ENCODE measurements at regions of chr7 and their contacts with region 1.

Region 1: GRCh38 chr7:44565097-44565794 is 8.5 kb downstream of the DDX56 start:
- DNase-seq: peak in 33 of 35 experiments; percentile 12 to 75 (median 51)
- ATAC-seq: peak; percentile 83 to 85 (median 84)
- H3K4me3 ChIP-seq: no peak overlapping the region
- H3K4me3 Mint-ChIP-seq: no peak overlapping the region
- H3K27ac ChIP-seq: no peak overlapping the region
- H3K27ac Mint-ChIP-seq: peak overlapping the region; percentile 25 to 61
- H3K4me1 ChIP-seq: peaks cover 0 to 9% of the 10 kb centered on the region in 2 experiments
- H3K4me1 Mint-ChIP-seq: peaks cover 8 to 20% (median 9%) of the 10 kb centered on the region in 3 donors
- H3K27me3 ChIP-seq: no peaks in the 10 kb centered on the region
- H3K27me3 Mint-ChIP-seq: no peaks in the 10 kb centered on the region

Region 2: GRCh38 chr7:44240983-44241510 is 324.2 kb before region 1 on chr7:
- CTCF ChIA-PET with region 1: interaction called in 1 of 2 experiments, 12 read pairs
- POLR2A ChIA-PET with region 1: no interaction called
- DNase-seq: peak in 34 of 35 experiments; percentile 11 to 72 (median 45)
- ATAC-seq: peak; percentile 73 to 94 (median 84)
- H3K4me3 ChIP-seq: peak overlapping the region in 1 of 2 donors; percentile 21
- H3K4me3 Mint-ChIP-seq: peak overlapping the region in 2 of 3 donors; percentile 39 to 45
- H3K27ac ChIP-seq: no peak overlapping the region
- H3K27ac Mint-ChIP-seq: no peak overlapping the region
- H3K4me1 ChIP-seq: peaks cover 0 to 10% of the 10 kb centered on the region in 2 experiments
- H3K4me1 Mint-ChIP-seq: peaks cover 0 to 6% (median 2%) of the 10 kb centered on the region in 3 donors
- H3K27me3 ChIP-seq: peaks cover 0 to 15% of the 10 kb centered on the region in 2 experiments
- H3K27me3 Mint-ChIP-seq: no peaks in the 10 kb centered on the region

Region 3: GRCh38 chr7:44595934-44596635 is 30.8 kb after region 1 on chr7:
- CTCF ChIA-PET with region 1: no interaction called
- POLR2A ChIA-PET with region 1: no interaction called
- DNase-seq: no peak
- ATAC-seq: no peak
- H3K4me3 ChIP-seq: no peak overlapping the region
- H3K4me3 Mint-ChIP-seq: no peak overlapping the region
- H3K27ac ChIP-seq: no peak overlapping the region
- H3K27ac Mint-ChIP-seq: no peak overlapping the region
- H3K4me1 ChIP-seq: no peaks in the 10 kb centered on the region
- H3K4me1 Mint-ChIP-seq: no peaks in the 10 kb centered on the region
- H3K27me3 ChIP-seq: peaks cover 0 to 9% of the 10 kb centered on the region in 2 experiments
- H3K27me3 Mint-ChIP-seq: no peaks in the 10 kb centered on the region

Region 4: GRCh38 chr7:45136106-45137060 is 571.1 kb after region 1 on chr7:
- CTCF ChIA-PET with region 1: no interaction called
- POLR2A ChIA-PET with region 1: no interaction called
- DNase-seq: peak; percentile 30 to 92 (median 59)
- ATAC-seq: peak; percentile 80 to 90 (median 84)
- H3K4me3 ChIP-seq: no peak overlapping the region
- H3K4me3 Mint-ChIP-seq: no peak overlapping the region
- H3K27ac ChIP-seq: no peak overlapping the region
- H3K27ac Mint-ChIP-seq: peak overlapping the region in 1 of 2 donors; percentile 16
- H3K4me1 ChIP-seq: peaks cover 0 to 9% of the 10 kb centered on the region in 2 experiments
- H3K4me1 Mint-ChIP-seq: peaks cover 5 to 9% (median 7%) of the 10 kb centered on the region in 3 donors
- H3K27me3 ChIP-seq: peaks cover 0 to 4% of the 10 kb centered on the region in 2 experiments
- H3K27me3 Mint-ChIP-seq: peaks cover 0 to 4% of the 10 kb centered on the region in 2 donors

Measured in T-cell (primary cell).